ENCODE measurements at regions of chr11 and their contacts with region 1.

Region 1: GRCh38 chr11:16613512-16614381 is 124.7 kb upstream of the C11orf58 start:
- DNase-seq: peak; percentile 82
- ATAC-seq: peak; percentile 98
- H3K4me3 Mint-ChIP-seq: peak overlapping the region; percentile 64
- H3K27ac Mint-ChIP-seq: no peak overlapping the region
- H3K4me1 Mint-ChIP-seq: peaks cover 14% of the 10 kb centered on the region
- H3K27me3 Mint-ChIP-seq: peaks cover 43% of the 10 kb centered on the region

Region 2: GRCh38 chr11:15650105-15650938 is 963.4 kb before region 1 on chr11:
- CTCF ChIA-PET with region 1: interaction called, 12 read pairs
- DNase-seq: peak; percentile 77
- ATAC-seq: peak; percentile 93
- H3K4me3 Mint-ChIP-seq: no peak overlapping the region
- H3K27ac Mint-ChIP-seq: no peak overlapping the region
- H3K4me1 Mint-ChIP-seq: peaks cover 2% of the 10 kb centered on the region
- H3K27me3 Mint-ChIP-seq: peaks cover 18% of the 10 kb centered on the region

Measured in activated CD8-positive, alpha-beta memory T cell treated with anti-CD3 and anti-CD28 coated beads, Interleukin-2, amount 10 ng/mL, durations not matched to agents 7 days and 5 days (primary cell).